Mammary epithelial cell (primary cell): ENCODE measurements at regions of chr1 and their contacts with region 1.

Region 1: GRCh38 chr1:112686835-112687234 is 12.4 kb downstream of the MOV10 start:
- DNase-seq: peak; percentile 42
- H3K4me3 ChIP-seq: no peak overlapping the region
- H3K27ac ChIP-seq: peak overlapping the region; percentile 91
- H3K4me1 ChIP-seq: peaks cover 27% of the 10 kb centered on the region
- H3K27me3 ChIP-seq: no peaks in the 10 kb centered on the region
- CTCF ChIP-seq: no peak

Region 2: DNA sequence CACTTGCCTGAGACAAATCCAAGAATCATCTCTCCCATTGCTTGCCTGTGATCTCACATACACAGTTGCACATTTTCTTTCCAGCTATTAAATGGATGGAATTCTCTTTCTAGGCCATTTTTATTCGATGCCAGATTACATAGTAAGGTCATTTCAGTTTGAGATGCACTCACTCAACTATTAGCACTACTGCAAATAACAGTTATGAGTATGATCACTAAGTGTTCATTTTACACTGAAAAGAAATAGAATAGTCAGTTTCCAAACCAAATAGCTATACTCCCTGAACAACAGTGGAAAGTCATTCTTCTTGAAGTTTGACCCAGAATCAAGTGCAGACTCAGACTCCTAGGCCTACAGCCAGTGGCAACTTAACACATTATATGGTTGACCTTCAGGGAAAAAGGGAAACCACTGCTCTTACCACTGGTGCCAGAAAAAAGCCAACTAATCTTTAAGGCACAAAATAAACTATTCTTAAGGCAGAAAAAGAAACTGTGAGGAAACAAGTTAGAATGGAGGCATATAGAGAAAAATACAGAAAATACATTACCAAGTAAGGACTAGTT is 146.5 kb before region 1 on chr1:
- CTCF ChIA-PET with region 1: no interaction called
- dilution Hi-C with region 1: no loop called
- in situ Hi-C with region 1: no loop called
- intact Hi-C with region 1: no loop called
- DNase-seq: no peak
- H3K4me3 ChIP-seq: no peak overlapping the region
- H3K27ac ChIP-seq: no peak overlapping the region
- H3K4me1 ChIP-seq: peaks cover 17% of the 10 kb centered on the region
- H3K27me3 ChIP-seq: no peaks in the 10 kb centered on the region
- CTCF ChIP-seq: no peak

Region 3: GRCh38 chr1:112700290-112701226 is 13.7 kb after region 1 on chr1:
- CTCF ChIA-PET with region 1: no interaction called
- dilution Hi-C with region 1: no loop called
- in situ Hi-C with region 1: no loop called
- intact Hi-C with region 1: loop called (anchors 1 kb)
- DNase-seq: peak; percentile 78
- H3K4me3 ChIP-seq: no peak overlapping the region
- H3K27ac ChIP-seq: peak overlapping the region; percentile 67
- H3K4me1 ChIP-seq: peaks cover 67% of the 10 kb centered on the region
- H3K27me3 ChIP-seq: no peaks in the 10 kb centered on the region
- CTCF ChIP-seq: peak in 1 of 2 donors; percentile 20